BJ (cell line): ENCODE measurements at regions of chr11 and their contacts with region 1.

Region 1: GRCh38 chr11:18312663-18313420 is 9.1 kb downstream of the HPS5 start:
- DNase-seq: no peak
- H3K4me3 ChIP-seq: no peak overlapping the region
- H3K27me3 ChIP-seq: no peaks in the 10 kb centered on the region
- CTCF ChIP-seq: no peak

Region 2: GRCh38 chr11:18012863-18013781 is 299.7 kb before region 1 on chr11 and contains the start of gene SERGEF:
- CTCF ChIA-PET with region 1: no interaction called
- POLR2A ChIA-PET with region 1: no interaction called
- DNase-seq: peak; percentile 33
- H3K4me3 ChIP-seq: peak within 1 kb of the TSS; percentile 86
- H3K27me3 ChIP-seq: no peaks in the 10 kb centered on the region
- CTCF ChIP-seq: no peak
- polyA plus RNA-seq, gene SERGEF: 17.2 and 17.4 TPM in 2 replicates

Region 3: GRCh38 chr11:18383388-18384156 is 70.7 kb after region 1 on chr11:
- CTCF ChIA-PET with region 1: no interaction called
- POLR2A ChIA-PET with region 1: interaction called, 12 read pairs
- DNase-seq: peak; percentile 97
- H3K4me3 ChIP-seq: no peak overlapping the region
- H3K27me3 ChIP-seq: no peaks in the 10 kb centered on the region
- CTCF ChIP-seq: no peak